ENCODE measurements at regions of chr5 and their contacts with region 1.

Region 1: GRCh38 chr5:172806897-172807672 is 27.0 kb upstream of the ERGIC1 start:
- DNase-seq: peak; percentile 86 to 89
- H3K4me3 ChIP-seq: peak overlapping the region; percentile 44; the same call in 1 of the 2 replicates
- H3K27ac ChIP-seq: peak overlapping the region; percentile 83
- H3K4me1 ChIP-seq: peaks cover 23% of the 10 kb centered on the region
- H3K27me3 ChIP-seq: no peaks in the 10 kb centered on the region
- CTCF ChIP-seq: no peak

Region 2: GRCh38 chr5:172724242-172725183 is 82.6 kb before region 1 on chr5:
- CTCF ChIA-PET with region 1: no interaction called
- POLR2A ChIA-PET with region 1: no interaction called
- intact Hi-C with region 1: no loop called
- DNase-seq: no peak
- H3K4me3 ChIP-seq: no peak overlapping the region
- H3K27ac ChIP-seq: no peak overlapping the region
- H3K4me1 ChIP-seq: no peaks in the 10 kb centered on the region
- H3K27me3 ChIP-seq: no peaks in the 10 kb centered on the region
- CTCF ChIP-seq: no peak

Region 3: DNA sequence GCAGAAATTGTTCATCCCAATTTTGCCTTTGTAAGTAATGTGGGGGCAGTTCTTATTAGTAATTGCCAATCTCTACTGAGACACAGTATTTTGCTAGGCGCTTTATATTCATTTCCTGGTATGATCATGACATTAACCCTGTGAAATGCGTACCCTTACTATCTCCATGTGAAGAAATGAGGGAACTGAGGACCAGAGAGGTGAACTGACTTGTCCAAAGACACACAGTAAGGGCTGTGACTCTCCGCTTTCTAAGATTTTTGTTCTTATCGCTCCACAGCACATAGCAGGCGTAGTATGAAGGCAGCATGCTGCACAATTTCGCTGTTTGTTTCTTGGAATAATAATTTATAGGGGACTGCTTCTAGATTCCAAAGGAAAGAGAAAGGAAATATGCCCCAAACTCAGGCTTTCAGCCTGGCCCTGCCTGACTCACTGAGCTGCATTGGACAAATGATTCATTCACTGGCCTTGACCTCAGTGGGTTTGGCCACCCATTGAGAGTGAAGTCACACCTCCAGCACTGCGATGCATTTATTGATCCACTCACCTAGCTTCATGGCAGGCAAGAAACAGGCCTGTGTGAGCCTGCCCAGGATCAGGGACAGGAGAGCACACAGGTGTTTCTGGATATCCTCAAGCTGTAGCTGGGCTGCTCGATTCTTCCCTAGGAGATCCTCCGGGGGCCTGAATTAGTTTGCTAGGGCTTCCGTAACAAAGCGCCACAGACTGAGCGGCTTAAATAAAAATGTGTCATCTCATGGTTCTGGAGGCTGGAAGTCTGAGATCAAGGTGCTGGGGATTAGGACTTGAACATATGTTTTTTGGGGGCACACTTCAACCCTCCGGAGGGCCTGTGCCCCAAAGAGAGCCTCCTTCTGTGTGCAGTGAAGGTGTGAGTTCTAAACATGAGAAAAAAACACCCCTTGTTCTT is 28.9 kb before region 1 on chr5:
- CTCF ChIA-PET with region 1: interaction called, 5 read pairs
- POLR2A ChIA-PET with region 1: interaction called, 6 read pairs
- intact Hi-C with region 1: loop called (anchors 1 kb)
- DNase-seq: peak; percentile 59 to 95
- H3K4me3 ChIP-seq: peak overlapping the region; percentile 39; the same call in 1 of the 2 replicates
- H3K27ac ChIP-seq: peak overlapping the region; percentile 100
- H3K4me1 ChIP-seq: peaks cover 74% of the 10 kb centered on the region
- H3K27me3 ChIP-seq: no peaks in the 10 kb centered on the region
- CTCF ChIP-seq: no peak

Region 4: DNA sequence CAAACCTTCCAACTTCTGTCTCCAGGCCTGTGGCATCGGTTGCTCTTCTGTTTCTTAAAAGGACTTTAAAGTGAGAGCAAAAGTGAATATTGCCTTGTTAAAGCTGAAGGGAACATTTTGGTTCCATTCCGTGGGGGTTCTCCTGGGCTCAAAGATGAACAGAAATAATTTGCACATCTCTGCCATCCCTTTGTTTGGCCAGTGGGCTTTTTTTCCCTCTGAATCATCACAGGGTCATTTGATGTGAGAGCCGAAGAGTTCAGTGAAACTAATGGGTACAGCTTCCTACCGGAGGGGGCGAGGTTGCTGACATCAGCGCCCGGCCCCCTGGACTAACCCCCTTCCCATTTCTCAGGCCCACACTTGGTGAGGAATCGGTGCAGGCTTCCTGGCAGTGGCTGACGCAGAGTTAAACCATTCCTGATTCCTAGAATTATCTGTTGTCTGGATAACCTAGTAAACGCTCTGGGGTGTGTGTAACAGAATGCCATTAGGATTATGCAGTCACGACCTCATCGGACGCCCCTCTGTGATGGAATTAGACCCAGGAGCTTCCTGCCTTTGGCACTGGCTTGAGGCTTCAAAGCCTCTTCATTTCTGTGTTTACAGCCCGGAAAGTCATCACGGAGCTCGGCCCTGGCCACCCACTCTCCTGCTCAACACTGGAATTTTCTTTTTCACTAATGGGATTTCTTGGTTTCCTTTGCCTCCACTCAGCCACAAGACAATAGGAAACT is 90.6 kb after region 1 on chr5:
- CTCF ChIA-PET with region 1: no interaction called
- POLR2A ChIA-PET with region 1: no interaction called
- intact Hi-C with region 1: no loop called
- DNase-seq: no peak
- H3K4me3 ChIP-seq: no peak overlapping the region
- H3K27ac ChIP-seq: 0 out of 2 replicates have a peak overlapping the region, but pooled peaks have one; percentile 12
- H3K4me1 ChIP-seq: peaks cover 16% of the 10 kb centered on the region
- H3K27me3 ChIP-seq: no peaks in the 10 kb centered on the region
- CTCF ChIP-seq: no peak

Region 5: GRCh38 chr5:172910828-172911627 is 103.9 kb after region 1 on chr5:
- CTCF ChIA-PET with region 1: interaction called, 12 read pairs
- POLR2A ChIA-PET with region 1: no interaction called
- intact Hi-C with region 1: no loop called
- DNase-seq: peak; percentile 37 to 47
- H3K4me3 ChIP-seq: no peak overlapping the region
- H3K27ac ChIP-seq: no peak overlapping the region
- H3K4me1 ChIP-seq: peaks cover 7% of the 10 kb centered on the region
- H3K27me3 ChIP-seq: no peaks in the 10 kb centered on the region
- CTCF ChIP-seq: peak; percentile 57

Region 6: DNA sequence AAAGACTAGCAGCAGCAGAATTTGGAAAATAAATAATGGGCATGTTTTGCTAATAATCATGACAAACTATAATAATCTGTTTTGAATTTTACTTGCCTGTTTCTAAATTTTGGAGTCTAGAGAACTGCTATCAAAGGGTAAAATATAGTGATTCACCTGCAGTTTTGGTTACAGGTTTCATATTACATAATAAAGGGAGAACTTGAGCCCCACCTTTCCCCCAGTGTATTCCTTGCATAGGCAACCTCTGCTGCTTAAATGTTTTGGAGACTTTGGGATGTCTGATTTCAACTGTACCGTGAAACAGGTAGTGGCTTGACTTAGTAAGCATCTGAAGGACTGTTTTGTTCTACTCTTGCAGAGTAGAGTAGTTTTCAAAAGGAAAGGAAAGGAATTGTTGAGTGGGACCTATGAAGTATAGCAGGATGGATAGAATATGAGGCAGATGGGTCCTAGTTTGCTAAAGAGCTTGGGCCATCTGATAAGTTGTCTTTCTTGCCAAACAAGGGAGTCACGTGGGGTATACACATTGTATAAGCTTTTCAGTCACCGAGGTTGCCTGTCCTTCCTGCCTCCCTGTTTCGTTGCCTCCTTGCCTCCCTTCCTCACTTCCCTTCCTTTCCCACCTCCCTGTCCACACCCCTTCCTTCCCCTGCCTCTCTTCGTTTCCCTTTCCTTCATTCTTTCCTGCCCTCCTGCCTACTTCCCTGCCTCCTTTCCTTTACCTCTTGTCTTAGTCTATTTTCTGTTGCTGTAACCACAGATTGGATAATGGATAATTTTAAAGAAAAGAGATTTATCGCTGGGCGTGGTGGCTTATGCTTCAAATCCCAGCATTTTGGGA is 268.3 kb after region 1 on chr5:
- CTCF ChIA-PET with region 1: no interaction called
- POLR2A ChIA-PET with region 1: no interaction called
- intact Hi-C with region 1: no loop called
- DNase-seq: peak; percentile 37 to 78
- H3K4me3 ChIP-seq: peak overlapping the region; percentile 31
- H3K27ac ChIP-seq: peak overlapping the region; percentile 90
- H3K4me1 ChIP-seq: peaks cover 39% of the 10 kb centered on the region
- H3K27me3 ChIP-seq: no peaks in the 10 kb centered on the region
- CTCF ChIP-seq: no peak

Region 7: DNA sequence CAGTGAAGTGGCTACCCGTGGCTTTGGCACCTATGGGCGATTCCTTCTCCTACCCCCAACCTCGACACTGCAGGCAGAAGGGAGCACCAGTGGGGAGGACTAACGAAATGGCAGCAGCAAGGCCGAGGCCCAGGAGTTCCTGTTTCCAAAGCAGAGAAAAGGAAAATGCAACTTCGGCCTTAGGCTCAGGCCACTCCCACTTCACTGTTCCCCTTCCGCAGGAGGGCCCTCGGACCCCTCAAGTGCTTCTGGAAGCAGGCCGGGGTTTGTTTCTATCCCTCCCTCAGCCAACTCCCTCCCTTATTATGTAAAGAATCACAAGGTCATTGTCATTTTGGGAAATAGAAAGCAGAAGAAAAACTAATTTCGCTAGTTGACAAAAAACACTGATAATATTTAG is 464.3 kb after region 1 on chr5:
- CTCF ChIA-PET with region 1: no interaction called
- POLR2A ChIA-PET with region 1: no interaction called
- intact Hi-C with region 1: no loop called
- DNase-seq: no peak
- H3K4me3 ChIP-seq: no peak overlapping the region
- H3K27ac ChIP-seq: no peak overlapping the region
- H3K4me1 ChIP-seq: no peaks in the 10 kb centered on the region
- H3K27me3 ChIP-seq: peaks cover under 1% of the 10 kb centered on the region; the same call in 1 of the 2 replicates
- CTCF ChIP-seq: no peak